Activated CD4-positive, alpha-beta memory T cell treated with anti-CD3 and anti-CD28 coated beads for 36 hours (primary cell): ENCODE measurements at regions of chrX and their contacts with region 1.

Region 1: GRCh38 chrX:107627838-107628661 is at the start of gene PRPS1:
- DNase-seq: peak; percentile 93
- H3K4me3 Mint-ChIP-seq: peak within 1 kb of the TSS; percentile 84
- H3K27ac Mint-ChIP-seq: peak within 1 kb of the TSS; percentile 85
- H3K4me1 Mint-ChIP-seq: peaks cover 25% of the 10 kb centered on the region
- H3K27me3 Mint-ChIP-seq: no peaks in the 10 kb centered on the region
- total RNA-seq, gene PRPS1: 132 to 141 TPM

Region 2: GRCh38 chrX:106481341-106481740 is 1146.7 kb before region 1 on chrX:
- CTCF ChIA-PET with region 1: no interaction called
- POLR2A ChIA-PET with region 1: no interaction called
- intact Hi-C with region 1: loop called (anchors 10 kb)
- DNase-seq: no peak
- H3K4me3 Mint-ChIP-seq: no peak overlapping the region
- H3K27ac Mint-ChIP-seq: no peak overlapping the region
- H3K4me1 Mint-ChIP-seq: peaks cover 27% of the 10 kb centered on the region
- H3K27me3 Mint-ChIP-seq: no peaks in the 10 kb centered on the region

Region 3: DNA sequence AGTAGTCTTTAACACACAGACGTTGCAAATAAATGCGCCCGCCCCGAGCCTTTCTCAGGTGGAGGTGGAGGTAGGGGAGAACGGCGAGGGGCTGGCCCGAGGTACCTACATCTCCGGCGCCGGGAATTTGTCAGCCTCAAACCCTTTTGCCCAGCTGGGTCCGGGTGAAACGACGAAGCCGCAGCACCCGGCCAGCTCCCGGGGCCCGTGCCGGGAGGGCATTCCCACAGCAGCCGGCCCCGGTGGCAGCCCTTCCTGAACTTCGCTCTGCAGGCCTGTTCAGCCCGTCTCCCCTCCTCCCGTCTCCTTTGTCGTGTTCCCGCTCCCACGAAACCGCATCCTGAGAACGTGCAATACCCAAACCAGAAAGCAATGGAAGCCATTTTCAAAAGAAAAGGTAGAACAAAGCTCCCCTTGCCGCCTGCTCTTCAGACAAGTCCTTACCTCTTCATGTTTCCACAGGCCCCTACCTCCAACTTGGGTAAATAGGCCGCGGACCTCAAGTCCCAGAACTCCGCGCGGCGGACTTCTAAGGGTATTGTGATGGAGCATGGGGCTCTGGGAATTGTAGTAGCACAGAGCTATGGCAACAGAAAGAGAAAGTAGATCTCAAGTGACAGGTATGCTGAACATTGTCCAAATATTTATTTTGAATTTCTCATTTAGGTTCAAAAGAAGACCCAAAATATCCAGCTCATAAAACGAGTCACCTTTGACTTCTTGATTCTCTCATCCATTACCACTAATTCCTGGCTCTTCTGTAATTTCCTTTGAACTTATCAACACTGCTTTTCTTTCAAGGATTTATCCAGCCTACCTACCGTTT is 509.5 kb before region 1 on chrX and contains the start of gene RBM41:
- CTCF ChIA-PET with region 1: no interaction called
- POLR2A ChIA-PET with region 1: no interaction called
- intact Hi-C with region 1: loop called (anchors 1 kb)
- DNase-seq: peak; percentile 81
- H3K4me3 Mint-ChIP-seq: peak within 1 kb of the TSS; percentile 96
- H3K27ac Mint-ChIP-seq: peak within 1 kb of the TSS; percentile 93
- H3K4me1 Mint-ChIP-seq: peaks cover 32% of the 10 kb centered on the region
- H3K27me3 Mint-ChIP-seq: no peaks in the 10 kb centered on the region
- total RNA-seq, gene RBM41: 9.5 to 11.4 TPM

Region 4: DNA sequence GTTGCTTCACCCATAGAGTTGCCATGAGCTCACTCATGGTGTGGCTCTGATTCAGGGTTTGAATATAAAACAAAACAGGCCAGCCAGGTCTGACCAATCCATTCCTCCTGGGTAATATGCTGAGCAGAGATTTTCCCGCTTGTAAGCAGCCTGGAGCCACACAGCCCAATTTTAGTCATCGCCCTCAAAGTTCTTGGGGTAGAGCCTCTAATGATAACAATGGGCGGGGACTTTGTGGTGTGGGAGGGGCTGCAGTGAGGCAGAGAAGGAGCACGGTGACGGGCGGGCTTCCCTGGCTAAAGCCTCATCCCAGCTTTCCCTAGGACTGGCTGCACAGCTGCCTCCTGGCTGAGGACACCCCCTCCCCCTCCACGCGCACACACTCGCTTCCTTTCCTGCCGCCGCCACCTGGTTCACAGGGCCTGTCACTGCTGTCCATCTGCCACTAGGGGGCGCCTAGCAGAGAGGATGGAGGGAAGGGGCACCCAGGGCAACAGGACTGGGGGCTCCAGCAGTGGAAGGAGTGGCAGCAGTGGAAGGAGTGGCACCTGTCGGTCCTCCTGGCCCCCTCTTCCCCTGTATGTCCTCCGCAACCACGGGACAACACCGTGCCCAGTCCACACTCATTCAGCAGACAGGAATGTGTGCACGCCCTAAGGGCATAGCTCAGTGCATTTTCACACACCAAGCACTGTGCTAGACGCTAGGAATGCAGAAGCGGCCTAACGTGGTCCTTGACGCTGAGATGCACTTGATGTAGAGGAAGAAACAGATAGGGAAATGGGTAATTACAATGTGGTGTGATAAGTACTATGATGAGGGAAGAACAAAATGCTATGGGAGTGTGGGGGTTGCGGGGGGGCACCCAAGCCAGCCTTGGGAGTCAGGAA is 27.1 kb after region 1 on chrX:
- CTCF ChIA-PET with region 1: interaction called, 11 read pairs
- POLR2A ChIA-PET with region 1: interaction called, 5 read pairs
- intact Hi-C with region 1: loop called (anchors 2 kb)
- DNase-seq: peak; percentile 73
- H3K4me3 Mint-ChIP-seq: no peak overlapping the region
- H3K27ac Mint-ChIP-seq: no peak overlapping the region
- H3K4me1 Mint-ChIP-seq: peaks cover 13% of the 10 kb centered on the region
- H3K27me3 Mint-ChIP-seq: no peaks in the 10 kb centered on the region

Region 5: GRCh38 chrX:107741404-107741790 is 113.3 kb after region 1 on chrX:
- CTCF ChIA-PET with region 1: no interaction called
- POLR2A ChIA-PET with region 1: interaction called, 6 read pairs
- intact Hi-C with region 1: loop called (anchors 1 kb)
- DNase-seq: no peak
- H3K4me3 Mint-ChIP-seq: peak overlapping the region; percentile 79
- H3K27ac Mint-ChIP-seq: peak overlapping the region; percentile 95
- H3K4me1 Mint-ChIP-seq: peaks cover 39% of the 10 kb centered on the region
- H3K27me3 Mint-ChIP-seq: peaks cover 2% of the 10 kb centered on the region

Region 6: GRCh38 chrX:107826238-107827029 is 198.4 kb after region 1 on chrX:
- CTCF ChIA-PET with region 1: no interaction called
- POLR2A ChIA-PET with region 1: interaction called, 9 read pairs
- intact Hi-C with region 1: loop called (anchors 1 kb)
- DNase-seq: peak; percentile 38
- H3K4me3 Mint-ChIP-seq: peak overlapping the region; percentile 74
- H3K27ac Mint-ChIP-seq: peak overlapping the region; percentile 71
- H3K4me1 Mint-ChIP-seq: peaks cover 43% of the 10 kb centered on the region
- H3K27me3 Mint-ChIP-seq: no peaks in the 10 kb centered on the region